ENCODE measurements at regions of chr9 and their contacts with region 1.

Region 1: DNA sequence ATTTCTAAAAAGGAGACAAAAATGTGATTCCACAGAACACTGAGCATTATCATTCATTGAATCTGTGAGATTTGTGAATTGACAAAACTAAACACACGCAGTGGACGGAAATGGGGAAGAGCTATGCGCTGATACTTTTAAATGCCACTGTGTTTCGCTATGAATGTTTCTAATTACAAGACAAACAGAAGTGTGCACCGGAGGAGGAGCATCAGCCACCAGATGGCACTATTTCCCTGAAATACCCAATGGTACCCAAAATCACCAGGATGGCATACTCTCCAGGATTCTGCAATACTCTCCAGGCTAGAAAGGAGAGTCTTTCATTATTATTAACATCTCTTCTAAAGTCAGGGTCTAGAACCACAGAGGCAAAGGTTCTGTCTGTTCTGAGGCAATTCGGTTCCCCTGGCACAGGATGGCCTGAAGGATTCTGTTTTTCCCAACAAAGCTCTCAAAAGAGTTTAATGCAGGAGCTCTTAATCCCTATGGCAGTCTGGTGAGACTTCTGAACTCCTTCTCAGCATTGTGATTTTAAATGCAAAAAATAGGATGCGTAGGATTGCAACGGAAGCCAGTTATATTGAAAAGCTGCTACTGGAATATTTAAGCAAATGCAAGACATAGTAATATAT is 13.8 kb upstream of the PUM3 start:
- DNase-seq: peak in 8 of 9 donors; percentile 20 to 58 (median 48)
- ATAC-seq: peak; percentile 91
- H3K4me3 ChIP-seq: no peak overlapping the region
- H3K4me3 Mint-ChIP-seq: no peak overlapping the region
- H3K27ac ChIP-seq: no peak overlapping the region
- H3K27ac Mint-ChIP-seq: no peak overlapping the region
- H3K4me1 ChIP-seq: no peaks in the 10 kb centered on the region
- H3K4me1 Mint-ChIP-seq: peaks cover 0 to 9% (median 3%) of the 10 kb centered on the region in 7 donors
- H3K27me3 ChIP-seq: no peaks in the 10 kb centered on the region
- H3K27me3 Mint-ChIP-seq: peaks cover 23 to 42% (median 32%) of the 10 kb centered on the region in 5 donors

Region 2: DNA sequence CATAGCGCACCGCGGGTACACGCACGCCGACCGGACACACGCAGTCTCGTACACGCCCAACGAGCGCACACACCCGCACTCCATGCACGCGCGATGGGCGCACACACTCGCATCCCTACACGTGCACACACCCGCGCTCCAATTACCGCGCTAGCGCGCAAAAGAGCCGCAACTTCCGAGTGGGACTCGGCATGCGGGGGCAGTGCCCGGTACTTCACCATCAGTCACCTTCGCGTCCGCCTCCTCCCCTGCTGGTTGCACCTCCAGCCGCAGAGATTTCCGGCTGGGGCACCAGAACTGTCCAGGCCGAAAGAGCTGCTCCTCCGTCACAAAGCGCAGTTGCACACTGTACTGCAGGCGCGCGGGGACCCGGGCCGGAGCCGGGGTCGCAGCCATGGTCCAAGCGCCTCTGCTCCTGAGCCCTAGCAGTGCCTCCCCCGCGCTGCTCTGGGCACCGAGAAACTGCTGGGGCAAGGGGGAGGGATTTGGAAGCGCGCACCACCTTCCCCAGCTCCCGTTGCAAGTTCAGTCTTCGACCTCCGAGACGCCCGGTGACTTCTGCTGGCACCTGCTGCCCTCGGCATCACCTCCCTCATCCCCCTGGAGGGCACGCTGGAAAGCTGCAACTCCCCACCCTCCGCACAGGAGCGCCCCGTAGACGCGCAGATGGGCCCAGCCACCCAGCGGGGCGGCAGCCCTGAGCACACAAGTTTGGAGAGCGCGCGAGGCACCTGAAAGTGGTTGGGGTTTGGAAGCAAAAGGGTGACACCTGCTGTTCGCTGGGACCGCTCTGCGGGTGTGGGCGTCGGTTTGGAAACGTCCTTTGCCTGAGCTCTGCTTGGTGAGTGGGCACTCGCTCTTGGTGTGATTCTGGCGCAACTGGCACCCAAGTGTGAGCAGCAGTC is 323.6 kb after region 1 on chr9:
- CTCF ChIA-PET with region 1: no interaction called
- POLR2A ChIA-PET with region 1: no interaction called
- intact Hi-C with region 1: loop called in 1 of 2 experiments (anchors 2 kb)
- DNase-seq: peak; percentile 4 to 50 (median 18)
- ATAC-seq: peak; percentile 51
- H3K4me3 ChIP-seq: no peak overlapping the region
- H3K4me3 Mint-ChIP-seq: peak overlapping the region; percentile 14 to 73 (median 45)
- H3K27ac ChIP-seq: no peak overlapping the region
- H3K27ac Mint-ChIP-seq: no peak overlapping the region
- H3K4me1 ChIP-seq: no peaks in the 10 kb centered on the region
- H3K4me1 Mint-ChIP-seq: peaks cover 0 to 18% (median 2%) of the 10 kb centered on the region in 7 donors
- H3K27me3 ChIP-seq: no peaks in the 10 kb centered on the region
- H3K27me3 Mint-ChIP-seq: peaks cover 36 to 51% (median 50%) of the 10 kb centered on the region in 5 donors

Region 3: GRCh38 chr9:3385871-3386270 is 528.2 kb after region 1 on chr9:
- CTCF ChIA-PET with region 1: no interaction called
- POLR2A ChIA-PET with region 1: no interaction called
- intact Hi-C with region 1: no loop called
- DNase-seq: peak in 1 of 9 donors; percentile 23
- ATAC-seq: no peak
- H3K4me3 ChIP-seq: no peak overlapping the region
- H3K4me3 Mint-ChIP-seq: peak overlapping the region in 4 of 10 donors; percentile 10 to 39 (median 27)
- H3K27ac ChIP-seq: no peak overlapping the region
- H3K27ac Mint-ChIP-seq: no peak overlapping the region
- H3K4me1 ChIP-seq: peaks cover 0 to 4% of the 10 kb centered on the region in 2 donors
- H3K4me1 Mint-ChIP-seq: peaks cover 13 to 38% (median 27%) of the 10 kb centered on the region in 7 donors
- H3K27me3 ChIP-seq: no peaks in the 10 kb centered on the region
- H3K27me3 Mint-ChIP-seq: no peaks in the 10 kb centered on the region

Region 4: GRCh38 chr9:3441197-3441816 is 583.6 kb after region 1 on chr9:
- CTCF ChIA-PET with region 1: interaction called, 5 read pairs
- POLR2A ChIA-PET with region 1: no interaction called
- intact Hi-C with region 1: loop called (anchors 1 to 2 kb)
- DNase-seq: peak in 8 of 9 donors; percentile 8 to 55 (median 39)
- ATAC-seq: peak; percentile 90
- H3K4me3 ChIP-seq: no peak overlapping the region
- H3K4me3 Mint-ChIP-seq: no peak overlapping the region
- H3K27ac ChIP-seq: no peak overlapping the region
- H3K27ac Mint-ChIP-seq: peak overlapping the region in 1 of 9 donors; percentile 49
- H3K4me1 ChIP-seq: no peaks in the 10 kb centered on the region
- H3K4me1 Mint-ChIP-seq: peaks cover 3 to 16% (median 11%) of the 10 kb centered on the region in 7 donors
- H3K27me3 ChIP-seq: no peaks in the 10 kb centered on the region
- H3K27me3 Mint-ChIP-seq: no peaks in the 10 kb centered on the region

Region 5: GRCh38 chr9:4117835-4118610 is 1260.3 kb after region 1 on chr9:
- CTCF ChIA-PET with region 1: no interaction called
- POLR2A ChIA-PET with region 1: no interaction called
- intact Hi-C with region 1: loop called in 1 of 2 experiments (anchors 5 kb)
- DNase-seq: peak in 7 of 9 donors; percentile 5 to 48 (median 13)
- ATAC-seq: no peak
- H3K4me3 ChIP-seq: no peak overlapping the region
- H3K4me3 Mint-ChIP-seq: no peak overlapping the region
- H3K27ac ChIP-seq: no peak overlapping the region
- H3K27ac Mint-ChIP-seq: no peak overlapping the region
- H3K4me1 ChIP-seq: no peaks in the 10 kb centered on the region
- H3K4me1 Mint-ChIP-seq: peaks cover 0 to 2% (median 0%) of the 10 kb centered on the region in 7 donors
- H3K27me3 ChIP-seq: no peaks in the 10 kb centered on the region
- H3K27me3 Mint-ChIP-seq: no peaks in the 10 kb centered on the region

Region 6: DNA sequence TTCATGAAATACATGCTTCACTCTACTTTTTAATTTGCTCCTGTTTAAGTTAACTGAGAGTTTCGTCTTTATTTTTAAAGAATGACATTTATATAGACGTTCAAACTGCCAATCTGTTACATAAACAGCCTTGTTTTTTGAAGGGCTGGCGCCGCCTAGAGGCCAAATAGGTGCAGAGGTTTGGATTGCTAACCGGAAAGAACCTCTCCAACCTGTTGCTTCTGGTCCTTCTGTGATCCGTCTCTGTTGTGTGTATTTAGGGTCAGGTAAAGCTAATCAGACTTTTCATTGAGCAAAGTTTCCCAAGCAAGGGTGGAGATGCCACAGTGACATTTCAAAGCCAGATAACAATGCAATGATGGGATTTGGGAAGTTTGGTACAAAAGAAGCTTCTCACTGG is 1481.7 kb after region 1 on chr9:
- CTCF ChIA-PET with region 1: no interaction called
- POLR2A ChIA-PET with region 1: no interaction called
- intact Hi-C with region 1: loop called in 1 of 2 experiments (anchors 1 kb)
- DNase-seq: peak; percentile 62 to 84 (median 77)
- ATAC-seq: peak; percentile 90
- H3K4me3 ChIP-seq: no peak overlapping the region
- H3K4me3 Mint-ChIP-seq: peak overlapping the region in 9 of 10 donors; percentile 10 to 70 (median 48)
- H3K27ac ChIP-seq: no peak overlapping the region
- H3K27ac Mint-ChIP-seq: peak overlapping the region; percentile 16 to 92 (median 44)
- H3K4me1 ChIP-seq: no peaks in the 10 kb centered on the region
- H3K4me1 Mint-ChIP-seq: peaks cover 3 to 8% (median 7%) of the 10 kb centered on the region in 7 donors
- H3K27me3 ChIP-seq: no peaks in the 10 kb centered on the region
- H3K27me3 Mint-ChIP-seq: peaks cover 0 to 2% (median 0%) of the 10 kb centered on the region in 5 donors

Region 7: GRCh38 chr9:4366591-4367330 is 1509.1 kb after region 1 on chr9:
- CTCF ChIA-PET with region 1: no interaction called
- POLR2A ChIA-PET with region 1: no interaction called
- intact Hi-C with region 1: loop called (anchors 1 to 10 kb)
- DNase-seq: peak in 5 of 9 donors; percentile 11 to 37 (median 23)
- ATAC-seq: no peak
- H3K4me3 ChIP-seq: no peak overlapping the region
- H3K4me3 Mint-ChIP-seq: no peak overlapping the region
- H3K27ac ChIP-seq: no peak overlapping the region
- H3K27ac Mint-ChIP-seq: no peak overlapping the region
- H3K4me1 ChIP-seq: no peaks in the 10 kb centered on the region
- H3K4me1 Mint-ChIP-seq: peaks cover 0 to 1% (median 0%) of the 10 kb centered on the region in 7 donors
- H3K27me3 ChIP-seq: no peaks in the 10 kb centered on the region
- H3K27me3 Mint-ChIP-seq: peaks cover 0 to 8% (median 0%) of the 10 kb centered on the region in 5 donors

Region 8: DNA sequence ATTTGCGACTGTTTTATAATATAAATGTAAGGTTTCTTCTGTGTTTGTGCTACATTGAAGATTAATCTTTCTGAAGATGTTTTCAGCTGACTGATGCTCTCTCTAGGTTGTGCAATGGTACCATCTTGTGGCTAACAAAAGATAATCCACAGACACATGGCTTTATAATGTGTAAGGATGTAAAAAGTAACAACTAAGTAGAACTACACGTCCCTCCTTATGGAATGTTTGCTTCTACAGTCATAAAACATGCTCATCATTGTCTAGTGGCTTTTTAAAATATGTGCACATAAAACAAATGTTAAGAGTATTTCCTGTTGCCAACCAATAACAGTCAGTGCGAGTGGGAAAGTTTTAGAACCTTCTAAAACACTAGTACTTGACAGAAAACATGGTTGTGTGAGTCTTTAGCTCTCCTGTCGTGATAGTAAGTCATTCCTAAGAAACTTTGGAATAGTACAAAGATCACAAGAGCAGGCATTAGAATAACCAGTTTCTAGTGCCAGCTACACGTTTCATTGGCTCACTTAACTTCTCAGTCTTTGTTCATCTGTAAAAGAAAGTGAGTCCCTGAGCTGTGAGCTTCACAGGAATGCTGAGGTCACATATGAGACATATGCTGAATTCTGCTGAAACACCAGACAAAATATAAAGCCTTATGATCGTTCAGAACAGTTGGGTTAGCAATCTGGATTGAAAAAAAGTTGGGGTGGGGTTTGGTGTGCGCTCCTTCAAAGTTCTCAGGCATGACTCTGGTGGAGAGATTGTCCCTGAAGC is 1517.9 kb after region 1 on chr9:
- CTCF ChIA-PET with region 1: no interaction called
- POLR2A ChIA-PET with region 1: no interaction called
- intact Hi-C with region 1: loop called (anchors 1 to 10 kb)
- DNase-seq: peak in 4 of 9 donors; percentile 24 to 32 (median 30)
- ATAC-seq: peak; percentile 55
- H3K4me3 ChIP-seq: no peak overlapping the region
- H3K4me3 Mint-ChIP-seq: no peak overlapping the region
- H3K27ac ChIP-seq: no peak overlapping the region
- H3K27ac Mint-ChIP-seq: peak overlapping the region in 1 of 9 donors; percentile 55
- H3K4me1 ChIP-seq: no peaks in the 10 kb centered on the region
- H3K4me1 Mint-ChIP-seq: no peaks in the 10 kb centered on the region
- H3K27me3 ChIP-seq: peaks cover 0 to 4% of the 10 kb centered on the region in 2 donors
- H3K27me3 Mint-ChIP-seq: peaks cover 0 to 22% (median 11%) of the 10 kb centered on the region in 5 donors

Measured in naive thymus-derived CD4-positive, alpha-beta T cell (primary cell).